Activated CD4-positive, alpha-beta T cell treated with anti-CD3 and anti-CD28 coated beads for 36 hours (primary cell): ENCODE measurements at regions of chr10 and their contacts with region 1.

Region 1: GRCh38 chr10:68067029-68067428 is 8.1 kb downstream of the HERC4 start:
- DNase-seq: no peak
- ATAC-seq: no peak
- H3K4me3 Mint-ChIP-seq: no peak overlapping the region
- H3K27ac Mint-ChIP-seq: no peak overlapping the region
- H3K4me1 Mint-ChIP-seq: peaks cover 42% of the 10 kb centered on the region
- H3K27me3 Mint-ChIP-seq: no peaks in the 10 kb centered on the region

Region 2: DNA sequence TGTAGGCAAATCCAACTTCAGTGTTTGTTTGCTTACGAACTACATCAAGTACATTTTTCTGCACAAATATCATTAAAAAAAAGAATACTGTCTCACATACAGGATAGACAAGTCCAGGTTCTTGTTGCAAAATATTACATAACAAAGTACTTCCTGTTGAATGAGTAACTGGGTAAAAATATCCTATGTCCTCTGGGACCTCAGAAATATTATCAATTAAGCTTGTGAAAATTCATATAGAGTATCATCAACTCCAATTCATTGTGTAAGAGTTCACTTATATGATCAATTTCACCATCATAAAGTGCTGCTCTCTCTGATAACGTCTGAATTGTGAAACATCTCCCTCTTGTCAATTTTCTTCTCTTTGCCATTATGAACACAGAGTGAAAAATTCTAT is 14.6 kb before region 1 on chr10:
- CTCF ChIA-PET with region 1: interaction called, 10 read pairs
- POLR2A ChIA-PET with region 1: no interaction called
- intact Hi-C with region 1: no loop called
- DNase-seq: no peak
- ATAC-seq: no peak
- H3K4me3 Mint-ChIP-seq: no peak overlapping the region
- H3K27ac Mint-ChIP-seq: no peak overlapping the region
- H3K4me1 Mint-ChIP-seq: peaks cover 30% of the 10 kb centered on the region
- H3K27me3 Mint-ChIP-seq: no peaks in the 10 kb centered on the region